Activated CD4-positive, alpha-beta memory T cell treated with anti-CD3 and anti-CD28 coated beads for 36 hours (primary cell): ENCODE measurements at regions of chr6 and their contacts with region 1.

Region 1: GRCh38 chr6:90350689-90351554 is 54.3 kb upstream of the BACH2 start:
- DNase-seq: peak; percentile 67
- H3K4me3 Mint-ChIP-seq: peak overlapping the region; percentile 31
- H3K27ac Mint-ChIP-seq: peak overlapping the region; percentile 85
- H3K4me1 Mint-ChIP-seq: peaks cover 44% of the 10 kb centered on the region
- H3K27me3 Mint-ChIP-seq: peaks cover under 1% of the 10 kb centered on the region

Region 2: GRCh38 chr6:89887452-89888137 is 463.3 kb before region 1 on chr6:
- CTCF ChIA-PET with region 1: no interaction called
- POLR2A ChIA-PET with region 1: no interaction called
- intact Hi-C with region 1: no loop called
- DNase-seq: peak; percentile 17
- H3K4me3 Mint-ChIP-seq: no peak overlapping the region
- H3K27ac Mint-ChIP-seq: no peak overlapping the region
- H3K4me1 Mint-ChIP-seq: peaks cover 9% of the 10 kb centered on the region
- H3K27me3 Mint-ChIP-seq: peaks cover 8% of the 10 kb centered on the region

Region 3: DNA sequence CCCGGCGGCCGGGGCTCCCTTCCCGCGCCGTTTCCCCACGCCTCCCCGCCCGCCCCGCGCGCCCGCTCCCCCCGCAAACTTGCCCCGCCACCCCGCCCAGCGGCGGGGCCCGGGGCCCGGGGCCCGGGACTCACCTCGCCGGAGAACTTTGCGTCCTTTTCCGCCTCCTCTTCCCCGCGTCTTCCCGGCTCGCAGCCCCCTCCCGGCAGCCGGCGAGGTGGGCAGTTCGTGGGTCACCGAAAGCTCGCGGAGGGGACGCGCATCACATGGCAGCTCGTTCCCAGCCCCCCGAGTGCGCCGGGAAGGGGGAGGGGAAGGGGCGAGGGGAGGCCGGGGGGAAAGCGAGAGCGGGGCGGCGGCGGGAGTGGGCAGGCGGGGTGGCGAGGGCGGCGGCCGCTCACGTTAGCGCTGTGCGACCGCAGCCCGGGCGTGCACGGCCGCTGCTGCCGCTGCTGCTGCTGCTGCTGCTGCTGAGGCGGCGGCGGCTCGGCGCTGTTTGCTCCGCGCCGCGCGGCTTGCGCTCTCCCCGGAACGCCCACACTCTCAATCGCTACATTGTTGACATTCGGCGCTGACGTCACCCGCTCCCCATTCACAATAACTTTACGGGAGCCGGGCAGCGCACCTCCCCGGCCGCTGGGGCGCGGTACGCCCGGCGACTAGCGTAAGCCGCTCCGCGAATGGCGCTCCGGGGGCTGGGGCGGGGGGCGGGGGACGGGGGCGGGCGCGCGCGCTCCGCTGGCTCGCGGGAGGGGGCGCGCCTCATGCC is 54.4 kb before region 1 on chr6 and contains the start of gene BACH2:
- CTCF ChIA-PET with region 1: interaction called, 3 read pairs
- POLR2A ChIA-PET with region 1: interaction called, 6 read pairs
- intact Hi-C with region 1: loop called (anchors 2 kb)
- DNase-seq: peak; percentile 97
- H3K4me3 Mint-ChIP-seq: peak within 1 kb of the TSS; percentile 79
- H3K27ac Mint-ChIP-seq: peak within 1 kb of the TSS; percentile 86
- H3K4me1 Mint-ChIP-seq: peaks cover 32% of the 10 kb centered on the region
- H3K27me3 Mint-ChIP-seq: peaks cover 9% of the 10 kb centered on the region
- total RNA-seq, gene BACH2: 49.2 to 55.4 TPM

Region 4: DNA sequence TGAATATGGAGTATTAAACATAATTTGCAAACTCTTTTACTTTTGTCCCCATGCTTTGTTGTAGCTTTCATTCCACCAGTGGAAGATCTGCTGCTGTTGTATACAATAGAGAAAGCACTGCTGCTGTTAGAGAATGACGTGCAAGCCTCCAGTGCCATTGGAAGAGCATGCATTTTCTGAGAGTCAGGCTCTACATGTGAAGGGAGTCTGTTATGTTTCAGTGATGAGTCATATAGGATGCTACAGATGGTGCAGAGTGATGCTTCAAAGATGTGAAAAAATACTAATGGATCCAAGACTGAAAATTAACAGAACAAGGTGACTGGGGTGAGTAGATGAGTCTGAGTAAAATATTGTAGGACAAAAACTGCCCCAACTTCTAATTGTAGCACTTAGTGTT is 31.9 kb before region 1 on chr6:
- CTCF ChIA-PET with region 1: no interaction called
- POLR2A ChIA-PET with region 1: interaction called, 9 read pairs
- intact Hi-C with region 1: loop called (anchors 1 kb)
- DNase-seq: peak; percentile 51
- H3K4me3 Mint-ChIP-seq: no peak overlapping the region
- H3K27ac Mint-ChIP-seq: peak overlapping the region; percentile 59
- H3K4me1 Mint-ChIP-seq: peaks cover 29% of the 10 kb centered on the region
- H3K27me3 Mint-ChIP-seq: peaks cover 3% of the 10 kb centered on the region

Region 5: DNA sequence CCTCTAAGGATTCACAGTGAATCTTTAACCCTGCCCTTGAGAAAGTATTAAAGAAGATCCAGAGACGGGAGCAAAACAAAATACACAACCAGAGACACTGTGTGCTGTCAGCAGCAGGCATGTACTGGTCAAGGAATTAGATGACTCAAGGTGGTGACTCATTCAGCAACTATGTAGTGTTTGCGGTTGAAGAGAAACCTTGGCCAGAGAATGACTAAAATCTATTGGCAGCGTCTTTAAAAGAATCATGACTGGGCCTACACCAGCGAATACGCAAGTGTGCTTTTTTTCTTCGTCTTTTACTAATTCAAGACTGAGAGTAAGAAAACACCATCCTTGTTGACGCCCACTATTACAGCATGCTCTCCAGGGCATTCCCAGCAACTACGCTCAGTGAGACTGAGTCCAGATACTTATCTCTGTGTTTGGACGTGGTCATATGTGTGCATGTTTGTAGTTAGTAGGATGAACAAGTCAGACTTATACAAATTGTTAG is 18.1 kb after region 1 on chr6:
- CTCF ChIA-PET with region 1: interaction called, 3 read pairs
- POLR2A ChIA-PET with region 1: no interaction called
- intact Hi-C with region 1: loop called (anchors 1 kb)
- DNase-seq: peak; percentile 63
- H3K4me3 Mint-ChIP-seq: no peak overlapping the region
- H3K27ac Mint-ChIP-seq: peak overlapping the region; percentile 35
- H3K4me1 Mint-ChIP-seq: peaks cover 20% of the 10 kb centered on the region
- H3K27me3 Mint-ChIP-seq: no peaks in the 10 kb centered on the region

Region 6: DNA sequence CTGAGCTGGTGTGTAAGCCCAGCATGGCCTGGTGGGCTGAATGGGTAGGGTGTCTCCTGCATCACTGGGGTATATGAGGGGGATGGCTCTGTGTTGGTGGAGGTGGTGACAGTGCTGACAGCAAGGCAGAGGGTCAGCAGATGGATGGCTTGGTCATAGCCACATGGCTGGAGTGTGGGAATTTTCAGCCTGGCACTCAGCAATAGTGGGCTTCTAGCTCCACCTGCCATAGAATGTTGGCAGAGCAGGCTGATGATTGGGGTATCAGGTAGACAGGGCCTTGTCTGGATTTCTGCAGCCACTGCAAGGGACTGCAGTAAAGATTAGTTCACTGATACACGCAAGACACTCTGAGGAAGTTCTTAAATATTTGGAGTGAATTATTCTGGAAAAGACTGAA is 83.2 kb after region 1 on chr6:
- CTCF ChIA-PET with region 1: no interaction called
- POLR2A ChIA-PET with region 1: no interaction called
- intact Hi-C with region 1: no loop called
- DNase-seq: no peak
- H3K4me3 Mint-ChIP-seq: no peak overlapping the region
- H3K27ac Mint-ChIP-seq: no peak overlapping the region
- H3K4me1 Mint-ChIP-seq: peaks cover 22% of the 10 kb centered on the region
- H3K27me3 Mint-ChIP-seq: no peaks in the 10 kb centered on the region